Heart left ventricle (tissue), 16 donors: ENCODE measurements at regions of chr12 and their contacts with region 1.

Region 1: DNA sequence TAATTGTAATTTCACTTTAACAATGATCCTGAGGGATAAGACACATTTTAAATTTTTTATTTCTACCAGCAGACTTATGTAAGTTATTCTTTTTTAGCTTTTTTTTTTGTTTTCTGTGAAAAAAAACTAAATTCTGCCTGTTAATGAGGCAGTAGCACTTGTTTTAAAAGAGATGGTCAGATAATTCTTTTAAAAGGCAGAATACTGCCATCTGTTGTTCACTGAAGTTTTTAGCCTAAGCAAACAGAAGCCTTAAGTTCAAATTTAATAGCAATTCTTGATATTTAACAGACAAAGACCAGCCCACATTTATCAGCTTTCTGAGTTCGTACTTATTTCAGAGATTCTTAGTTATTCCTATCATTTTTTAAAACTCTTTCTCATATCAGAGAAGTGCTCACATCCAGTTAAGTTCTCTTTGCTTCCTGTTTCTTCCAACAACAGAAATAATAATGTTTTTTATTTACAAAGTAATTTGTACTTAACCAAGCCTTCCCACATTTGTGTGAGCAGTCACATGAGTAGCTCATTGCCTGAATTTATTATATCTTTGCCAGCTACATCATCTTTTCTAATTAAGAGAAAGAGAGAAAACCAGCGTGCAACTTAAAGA is 93.4 kb upstream of the SLCO1C1 start:
- DNase-seq: no peak
- ATAC-seq: no peak
- H3K4me3 ChIP-seq: no peak overlapping the region
- H3K27ac ChIP-seq: peak overlapping the region in 11 of 12 donors; percentile 15 to 70 (median 61)
- H3K4me1 ChIP-seq: peaks cover 0 to 46% (median 16%) of the 10 kb centered on the region in 12 donors
- H3K27me3 ChIP-seq: no peaks in the 10 kb centered on the region
- CTCF ChIP-seq: peak; percentile 11 to 65 (median 46)
- POLR2A ChIP-seq: no peak

Region 2: GRCh38 chr12:19744734-19745218 is 857.0 kb before region 1 on chr12:
- intact Hi-C with region 1: loop called in 2 of 10 experiments (anchors 10 kb)
- DNase-seq: no peak
- ATAC-seq: peak; percentile 78 to 92 (median 89)
- H3K4me3 ChIP-seq: no peak overlapping the region
- H3K27ac ChIP-seq: peak overlapping the region in 9 of 12 donors; percentile 28 to 75 (median 61)
- H3K4me1 ChIP-seq: peaks cover 4 to 27% (median 20%) of the 10 kb centered on the region in 12 donors
- H3K27me3 ChIP-seq: no peaks in the 10 kb centered on the region
- CTCF ChIP-seq: no peak
- POLR2A ChIP-seq: no peak

Region 3: GRCh38 chr12:20463913-20464524 is 137.8 kb before region 1 on chr12:
- intact Hi-C with region 1: loop called in 4 of 10 experiments (anchors 2 to 10 kb)
- DNase-seq: no peak
- ATAC-seq: no peak
- H3K4me3 ChIP-seq: no peak overlapping the region
- H3K27ac ChIP-seq: peak overlapping the region in 5 of 12 donors; percentile 47 to 83 (median 64)
- H3K4me1 ChIP-seq: peaks cover 0 to 68% (median 29%) of the 10 kb centered on the region in 12 donors
- H3K27me3 ChIP-seq: no peaks in the 10 kb centered on the region
- CTCF ChIP-seq: peak; percentile 36 to 77 (median 58)
- POLR2A ChIP-seq: no peak

Region 4: GRCh38 chr12:20469756-20470155 is 132.0 kb before region 1 on chr12:
- intact Hi-C with region 1: loop called in 4 of 10 experiments (anchors 2 to 10 kb)
- DNase-seq: no peak
- ATAC-seq: no peak
- H3K4me3 ChIP-seq: no peak overlapping the region
- H3K27ac ChIP-seq: peak overlapping the region in 10 of 12 donors; percentile 5 to 68 (median 26)
- H3K4me1 ChIP-seq: peaks cover 9 to 95% (median 44%) of the 10 kb centered on the region in 12 donors
- H3K27me3 ChIP-seq: no peaks in the 10 kb centered on the region
- CTCF ChIP-seq: no peak
- POLR2A ChIP-seq: no peak